ENCODE measurements at regions of chr21 and their contacts with region 1.

Region 1: DNA sequence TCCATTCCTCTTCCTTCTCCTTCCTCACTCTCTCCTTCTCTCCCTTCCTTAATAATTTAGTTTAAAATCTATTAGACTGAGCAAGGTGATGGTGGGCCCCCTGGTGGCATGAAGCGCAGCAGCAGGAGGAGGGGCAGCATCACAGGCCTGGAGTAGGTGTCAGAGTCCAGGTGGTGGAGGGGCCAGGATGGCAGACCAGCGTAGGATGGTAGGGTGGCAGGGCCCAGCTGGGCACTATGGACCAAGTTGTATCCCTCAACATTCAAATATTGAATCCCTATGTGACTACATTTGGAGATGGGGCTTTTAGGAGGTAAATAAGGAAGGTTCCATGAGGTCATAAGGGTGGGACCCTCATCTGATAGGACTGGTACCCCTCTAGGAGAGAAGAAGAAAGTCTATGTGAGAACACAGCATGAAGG is 61.0 kb downstream of the WDR4 start:
- DNase-seq: peak; percentile 24 to 70 (median 52)
- ATAC-seq: peak; percentile 85
- H3K4me3 ChIP-seq: no peak overlapping the region
- H3K4me3 Mint-ChIP-seq: no peak overlapping the region
- H3K27ac ChIP-seq: no peak overlapping the region
- H3K27ac Mint-ChIP-seq: peak overlapping the region in 6 of 9 donors; percentile 3 to 69 (median 26)
- H3K4me1 ChIP-seq: no peaks in the 10 kb centered on the region
- H3K4me1 Mint-ChIP-seq: peaks cover 0 to 6% (median 4%) of the 10 kb centered on the region in 7 donors
- H3K27me3 ChIP-seq: no peaks in the 10 kb centered on the region
- H3K27me3 Mint-ChIP-seq: peaks cover 0 to 7% (median 5%) of the 10 kb centered on the region in 5 donors

Region 2: GRCh38 chr21:42593007-42593806 is 225.1 kb before region 1 on chr21:
- CTCF ChIA-PET with region 1: interaction called, 25 read pairs
- POLR2A ChIA-PET with region 1: no interaction called
- intact Hi-C with region 1: loop called (anchors 1 to 5 kb)
- DNase-seq: peak; percentile 52 to 75 (median 68)
- ATAC-seq: peak; percentile 81
- H3K4me3 ChIP-seq: no peak overlapping the region
- H3K4me3 Mint-ChIP-seq: peak overlapping the region in 1 of 10 donors; percentile 25
- H3K27ac ChIP-seq: no peak overlapping the region
- H3K27ac Mint-ChIP-seq: peak overlapping the region in 1 of 9 donors; percentile 15
- H3K4me1 ChIP-seq: peaks cover 0 to 13% of the 10 kb centered on the region in 2 donors
- H3K4me1 Mint-ChIP-seq: peaks cover 0 to 29% (median 22%) of the 10 kb centered on the region in 7 donors
- H3K27me3 ChIP-seq: no peaks in the 10 kb centered on the region
- H3K27me3 Mint-ChIP-seq: no peaks in the 10 kb centered on the region

Region 3: GRCh38 chr21:42652527-42653230 is 165.7 kb before region 1 on chr21:
- CTCF ChIA-PET with region 1: interaction called, 6 read pairs
- POLR2A ChIA-PET with region 1: no interaction called
- intact Hi-C with region 1: loop called (anchors 1 to 2 kb)
- DNase-seq: no peak
- ATAC-seq: no peak
- H3K4me3 ChIP-seq: no peak overlapping the region
- H3K4me3 Mint-ChIP-seq: peak overlapping the region; percentile 68 to 88 (median 84)
- H3K27ac ChIP-seq: no peak overlapping the region
- H3K27ac Mint-ChIP-seq: peak overlapping the region in 8 of 9 donors; percentile 1 to 86 (median 68)
- H3K4me1 ChIP-seq: peaks cover 0 to 15% of the 10 kb centered on the region in 2 donors
- H3K4me1 Mint-ChIP-seq: peaks cover 17 to 29% (median 24%) of the 10 kb centered on the region in 7 donors
- H3K27me3 ChIP-seq: peaks cover 0 to 4% of the 10 kb centered on the region in 2 donors
- H3K27me3 Mint-ChIP-seq: peaks cover 0 to 50% (median 0%) of the 10 kb centered on the region in 5 donors

Region 4: GRCh38 chr21:42746593-42747275 is 71.6 kb before region 1 on chr21:
- CTCF ChIA-PET with region 1: no interaction called
- POLR2A ChIA-PET with region 1: no interaction called
- intact Hi-C with region 1: loop called (anchors 1 to 10 kb)
- DNase-seq: peak; percentile 33 to 85 (median 77)
- ATAC-seq: peak; percentile 90
- H3K4me3 ChIP-seq: peak overlapping the region; percentile 36
- H3K4me3 Mint-ChIP-seq: peak overlapping the region; percentile 72 to 90 (median 80)
- H3K27ac ChIP-seq: peak overlapping the region; percentile 63
- H3K27ac Mint-ChIP-seq: peak overlapping the region; percentile 96 to 100 (median 98)
- H3K4me1 ChIP-seq: peaks cover 19 to 26% of the 10 kb centered on the region in 2 donors
- H3K4me1 Mint-ChIP-seq: peaks cover 18 to 46% (median 32%) of the 10 kb centered on the region in 7 donors
- H3K27me3 ChIP-seq: no peaks in the 10 kb centered on the region
- H3K27me3 Mint-ChIP-seq: no peaks in the 10 kb centered on the region

Region 5: DNA sequence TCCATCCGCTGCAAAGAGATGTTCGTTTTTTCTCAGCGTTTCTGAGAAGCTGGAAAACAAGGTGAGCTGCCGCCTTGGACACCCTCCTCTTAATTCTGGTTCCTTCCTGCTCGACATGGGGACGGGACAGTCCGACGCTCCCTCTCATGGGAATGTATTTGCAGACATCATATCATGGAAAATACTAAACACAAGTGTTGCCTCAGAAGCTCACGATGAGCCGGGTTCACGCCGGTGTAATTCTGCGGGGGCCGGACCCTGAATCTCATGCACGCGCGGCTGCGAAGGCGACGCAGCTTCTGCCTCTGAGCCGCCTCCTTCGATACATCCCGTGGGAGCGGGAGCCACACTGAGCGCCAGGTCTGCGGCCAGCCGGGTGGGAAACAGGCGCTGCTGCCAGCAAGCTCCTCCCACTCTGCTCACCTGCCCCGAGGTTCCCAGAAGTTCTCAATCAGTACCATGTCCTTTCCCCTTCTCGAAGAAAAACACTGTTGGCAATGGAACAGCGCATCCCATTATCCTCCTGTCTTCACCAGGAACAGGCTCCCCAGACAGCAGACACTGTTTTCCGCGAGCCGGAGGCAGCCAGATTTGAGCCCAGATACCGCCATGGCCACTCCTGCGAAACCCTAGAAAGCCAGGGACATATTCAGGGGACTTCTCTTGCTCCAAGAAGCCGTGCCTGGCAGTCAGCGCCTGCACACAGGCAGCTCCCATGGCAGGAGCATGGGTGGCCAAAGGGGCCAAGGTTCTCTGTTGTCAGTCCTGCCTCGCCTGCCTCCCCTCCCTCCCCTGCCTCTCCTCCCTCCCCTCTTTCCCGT is 37.0 kb before region 1 on chr21:
- CTCF ChIA-PET with region 1: interaction called, 4 read pairs
- POLR2A ChIA-PET with region 1: interaction called, 3 read pairs
- intact Hi-C with region 1: loop called in 1 of 2 experiments (anchors 1 kb)
- DNase-seq: peak in 1 of 9 donors; percentile 11
- ATAC-seq: no peak
- H3K4me3 ChIP-seq: peak overlapping the region; percentile 30
- H3K4me3 Mint-ChIP-seq: peak overlapping the region; percentile 40 to 92 (median 80)
- H3K27ac ChIP-seq: peak overlapping the region; percentile 7
- H3K27ac Mint-ChIP-seq: peak overlapping the region; percentile 31 to 100 (median 87)
- H3K4me1 ChIP-seq: peaks cover 14 to 44% of the 10 kb centered on the region in 2 donors
- H3K4me1 Mint-ChIP-seq: peaks cover 35 to 65% (median 48%) of the 10 kb centered on the region in 7 donors
- H3K27me3 ChIP-seq: no peaks in the 10 kb centered on the region
- H3K27me3 Mint-ChIP-seq: peaks cover 0 to 37% (median 0%) of the 10 kb centered on the region in 5 donors